Activated CD4-positive, alpha-beta T cell treated with anti-CD3 and anti-CD28 coated beads, Interleukin-2, amount 10 ng/mL, durations not matched to agents 24 days and 14 days (primary cell): ENCODE measurements at regions of chr6 and their contacts with region 1.

Region 1: DNA sequence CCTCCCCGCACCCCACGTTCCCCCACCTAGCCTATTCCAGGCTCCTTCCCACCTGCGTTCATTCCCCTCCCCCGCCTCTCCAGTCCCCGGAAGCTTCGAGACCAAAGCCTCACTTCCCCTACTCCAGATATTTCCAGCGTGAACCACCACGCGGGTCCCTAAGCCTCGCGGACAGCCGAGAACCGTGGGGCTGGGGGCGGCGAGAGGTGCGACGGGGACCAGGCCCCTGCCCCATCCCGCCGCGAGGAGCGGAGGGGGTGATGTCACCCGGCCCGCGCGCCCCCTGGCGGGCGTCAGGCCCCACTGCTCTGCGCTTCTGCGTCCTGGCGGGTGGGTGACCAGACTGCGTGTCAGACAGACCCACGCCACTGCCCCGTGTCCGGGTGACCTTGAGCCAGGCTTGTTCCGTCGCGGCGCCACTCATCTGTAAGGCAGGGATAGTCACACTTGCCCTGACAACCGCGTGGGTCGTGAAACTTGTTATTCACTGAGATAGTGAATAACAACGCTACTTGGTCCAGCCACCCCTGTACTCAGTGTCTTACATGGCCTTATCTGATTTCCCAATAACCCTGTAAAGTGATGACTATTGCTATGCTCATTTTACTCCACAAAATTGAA is 9.0 kb upstream of the HSP90AB1 start:
- DNase-seq: peak; percentile 96
- H3K4me3 Mint-ChIP-seq: peak overlapping the region; percentile 89
- H3K27ac Mint-ChIP-seq: peak overlapping the region; percentile 98
- H3K4me1 Mint-ChIP-seq: peaks cover 33% of the 10 kb centered on the region
- H3K27me3 Mint-ChIP-seq: peaks cover 2% of the 10 kb centered on the region

Region 2: GRCh38 chr6:44312901-44313788 is 75.2 kb after region 1 on chr6 and contains the start of gene AARS2:
- intact Hi-C with region 1: loop called (anchors 2 kb)
- DNase-seq: peak; percentile 98
- H3K4me3 Mint-ChIP-seq: peak within 1 kb of the TSS; percentile 96
- H3K27ac Mint-ChIP-seq: peak within 1 kb of the TSS; percentile 97
- H3K4me1 Mint-ChIP-seq: peaks cover 16% of the 10 kb centered on the region
- H3K27me3 Mint-ChIP-seq: peaks cover 10% of the 10 kb centered on the region
- total RNA-seq, gene AARS2: 22.4 and 23.7 TPM in 2 replicates